ENCODE measurements at regions of chr11 and their contacts with region 1.

Region 1: GRCh38 chr11:72040726-72041441 is 39.5 kb downstream of the NUMA1 start:
- DNase-seq: peak; percentile 83 to 92 (median 84)
- H3K4me3 ChIP-seq: peak overlapping the region; percentile 79 to 88
- H3K4me3 Mint-ChIP-seq: no peak overlapping the region
- H3K27ac ChIP-seq: peak overlapping the region; percentile 75
- H3K27ac Mint-ChIP-seq: no peak overlapping the region
- H3K4me1 ChIP-seq: peaks cover 64% of the 10 kb centered on the region
- H3K4me1 Mint-ChIP-seq: peaks cover 29 to 45% (median 38%) of the 10 kb centered on the region in 4 donors
- H3K27me3 ChIP-seq: no peaks in the 10 kb centered on the region
- H3K27me3 Mint-ChIP-seq: no peaks in the 10 kb centered on the region

Region 2: GRCh38 chr11:71928737-71929452 is 112.0 kb before region 1 on chr11 and contains the start of gene RNF121:
- CTCF ChIA-PET with region 1: no interaction called
- POLR2A ChIA-PET with region 1: interaction called, 26 read pairs
- intact Hi-C with region 1: no loop called
- DNase-seq: peak; percentile 96 to 99 (median 96)
- H3K4me3 ChIP-seq: peak within 1 kb of the TSS; percentile 92 to 96
- H3K4me3 Mint-ChIP-seq: peak within 1 kb of the TSS; percentile 95 to 100 (median 98)
- H3K27ac ChIP-seq: peak within 1 kb of the TSS; percentile 84
- H3K27ac Mint-ChIP-seq: peak within 1 kb of the TSS; percentile 92 to 100 (median 99)
- H3K4me1 ChIP-seq: peaks cover 41% of the 10 kb centered on the region
- H3K4me1 Mint-ChIP-seq: peaks cover 40 to 60% (median 50%) of the 10 kb centered on the region in 4 donors
- H3K27me3 ChIP-seq: no peaks in the 10 kb centered on the region
- H3K27me3 Mint-ChIP-seq: no peaks in the 10 kb centered on the region
- total RNA-seq, gene RNF121: 28.0 to 33.0 TPM

Region 3: DNA sequence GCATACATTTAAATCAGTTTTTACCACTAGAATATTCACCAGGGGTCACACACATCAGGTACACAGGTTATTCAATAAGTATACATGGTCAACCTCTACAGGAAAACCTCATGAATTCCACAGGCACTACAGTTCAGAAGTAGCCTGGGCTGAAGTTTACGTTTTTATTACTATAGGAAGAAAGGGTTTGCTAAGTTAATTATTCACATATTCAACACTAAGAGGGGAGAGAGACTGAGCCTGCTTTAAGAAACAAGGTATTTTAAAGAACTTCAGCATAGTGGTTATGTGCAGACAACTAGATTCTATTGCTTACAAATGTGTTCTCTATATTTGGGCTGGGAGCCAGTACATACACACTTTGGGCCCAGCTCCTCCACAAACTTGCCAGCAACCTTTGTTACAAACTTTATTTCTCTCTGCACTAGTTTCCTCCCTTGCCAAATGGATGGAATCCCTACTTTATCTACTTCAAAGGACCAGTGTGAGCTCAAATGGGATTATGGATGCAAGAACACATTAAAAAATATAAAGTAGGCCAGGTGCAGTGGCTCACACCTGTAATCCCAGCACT is 10.3 kb before region 1 on chr11:
- CTCF ChIA-PET with region 1: interaction called, 88 read pairs
- POLR2A ChIA-PET with region 1: interaction called, 42 read pairs
- intact Hi-C with region 1: loop called (anchors 1 kb)
- DNase-seq: no peak
- H3K4me3 ChIP-seq: no peak overlapping the region
- H3K4me3 Mint-ChIP-seq: peak overlapping the region in 2 of 8 donors; percentile 2 to 16
- H3K27ac ChIP-seq: no peak overlapping the region
- H3K27ac Mint-ChIP-seq: peak overlapping the region; percentile 27 to 90 (median 73)
- H3K4me1 ChIP-seq: peaks cover 55% of the 10 kb centered on the region
- H3K4me1 Mint-ChIP-seq: peaks cover 27 to 56% (median 45%) of the 10 kb centered on the region in 4 donors
- H3K27me3 ChIP-seq: no peaks in the 10 kb centered on the region
- H3K27me3 Mint-ChIP-seq: no peaks in the 10 kb centered on the region

Region 4: GRCh38 chr11:72080256-72080974 is 39.5 kb after region 1 on chr11 and contains the starts of genes LRRC51 and NUMA1:
- CTCF ChIA-PET with region 1: interaction called, 11 read pairs
- POLR2A ChIA-PET with region 1: interaction called, 137 read pairs
- intact Hi-C with region 1: loop called (anchors 1 kb)
- DNase-seq: peak; percentile 98 to 100 (median 99)
- H3K4me3 ChIP-seq: peak within 1 kb of the TSS; percentile 74 to 79
- H3K4me3 Mint-ChIP-seq: peak within 1 kb of the TSS; percentile 89 to 96 (median 93)
- H3K27ac ChIP-seq: peak within 1 kb of the TSS; percentile 75
- H3K27ac Mint-ChIP-seq: peak within 1 kb of the TSS; percentile 91 to 100 (median 99)
- H3K4me1 ChIP-seq: peaks cover 27% of the 10 kb centered on the region
- H3K4me1 Mint-ChIP-seq: peaks cover 31 to 53% (median 38%) of the 10 kb centered on the region in 4 donors
- H3K27me3 ChIP-seq: no peaks in the 10 kb centered on the region
- H3K27me3 Mint-ChIP-seq: no peaks in the 10 kb centered on the region
- total RNA-seq, gene LRRC51: 4.2 to 4.5 TPM
- total RNA-seq, gene NUMA1: 376 to 380 TPM

Region 5: DNA sequence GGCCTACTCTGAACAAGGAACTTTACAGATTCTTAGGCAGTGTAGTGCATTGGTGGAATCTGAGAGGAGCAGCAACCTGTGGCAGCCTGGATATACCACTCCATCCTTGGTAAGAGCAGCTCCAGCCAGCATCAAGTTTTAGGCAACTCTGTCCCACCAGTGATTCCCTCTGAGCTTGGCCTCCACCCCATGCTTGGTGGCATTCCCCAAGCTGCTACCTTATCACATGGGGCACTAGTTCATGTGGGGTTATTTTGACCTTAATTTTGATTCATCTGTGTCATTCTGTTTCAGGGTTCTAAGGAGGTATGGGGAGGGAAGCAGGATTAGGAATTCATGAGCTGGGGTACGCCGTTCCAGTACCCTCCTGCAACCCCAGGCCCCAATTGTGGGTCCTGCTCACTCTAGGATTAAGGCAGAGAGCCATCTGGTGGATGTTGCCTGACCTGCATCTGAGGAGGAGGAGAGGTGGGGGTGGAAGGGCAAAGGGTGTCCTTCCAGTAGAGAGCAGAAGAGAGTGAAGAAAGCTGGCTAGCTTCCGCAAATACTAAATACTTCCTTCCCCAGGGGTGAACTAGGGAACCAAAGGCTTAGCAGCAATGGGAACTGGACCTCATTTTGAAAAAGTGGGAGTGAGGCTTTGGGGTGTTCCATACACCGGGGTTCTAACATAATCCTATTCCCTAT is 50.3 kb after region 1 on chr11:
- CTCF ChIA-PET with region 1: interaction called, 52 read pairs
- POLR2A ChIA-PET with region 1: interaction called, 137 read pairs
- intact Hi-C with region 1: loop called (anchors 1 kb)
- DNase-seq: peak; percentile 57 to 80 (median 66)
- H3K4me3 ChIP-seq: no peak overlapping the region
- H3K4me3 Mint-ChIP-seq: no peak overlapping the region
- H3K27ac ChIP-seq: no peak overlapping the region
- H3K27ac Mint-ChIP-seq: peak overlapping the region; percentile 10 to 91 (median 81)
- H3K4me1 ChIP-seq: no peaks in the 10 kb centered on the region
- H3K4me1 Mint-ChIP-seq: peaks cover 4 to 11% (median 9%) of the 10 kb centered on the region in 4 donors
- H3K27me3 ChIP-seq: no peaks in the 10 kb centered on the region
- H3K27me3 Mint-ChIP-seq: no peaks in the 10 kb centered on the region

Region 6: DNA sequence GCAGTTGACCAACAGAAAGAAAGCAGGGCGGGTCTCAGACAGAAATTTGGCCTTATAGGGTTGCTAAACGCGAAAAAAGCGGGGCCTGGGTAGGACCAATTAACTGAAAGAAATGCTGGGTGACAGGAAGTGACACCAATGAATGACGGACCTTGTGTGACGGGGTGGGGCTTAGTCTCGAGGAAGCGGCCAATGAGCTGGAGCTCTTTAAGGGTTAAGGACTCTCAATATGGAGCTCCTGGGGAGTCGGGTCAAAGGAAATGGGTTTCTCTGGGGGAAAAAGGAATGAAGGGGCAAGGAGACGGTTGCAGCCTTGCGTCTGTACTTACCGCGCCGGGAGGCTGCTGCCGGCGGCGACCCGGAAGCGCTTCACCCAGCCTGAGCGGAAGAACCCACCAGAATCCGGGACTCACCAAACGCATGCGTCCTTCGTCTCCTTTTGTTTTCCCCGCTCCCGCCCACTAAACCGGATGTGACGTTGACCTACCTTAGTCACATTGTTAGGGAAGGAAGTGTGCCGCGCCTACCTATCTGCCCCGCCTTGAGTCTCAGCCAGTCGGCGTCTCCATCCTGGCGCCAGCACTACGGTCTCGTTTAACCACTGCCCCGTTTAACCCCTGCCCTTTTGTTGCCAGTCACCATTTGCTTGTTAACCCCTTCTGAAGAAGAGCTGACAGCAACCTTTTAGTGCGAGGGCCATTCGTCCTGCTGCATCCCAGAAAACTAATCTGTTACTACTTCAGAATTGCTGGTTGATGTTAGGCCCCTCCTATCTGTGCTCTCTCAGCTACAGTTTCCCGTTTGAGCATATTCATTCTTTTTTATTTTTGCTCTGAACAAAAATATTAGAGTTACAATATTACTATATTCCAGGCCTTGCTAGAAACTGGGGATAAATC is 71.7 kb after region 1 on chr11 and contains the start of gene ANAPC15:
- CTCF ChIA-PET with region 1: interaction called, 4 read pairs
- POLR2A ChIA-PET with region 1: interaction called, 57 read pairs
- intact Hi-C with region 1: loop called (anchors 1 kb)
- DNase-seq: peak; percentile 98 to 100 (median 99)
- H3K4me3 ChIP-seq: peak within 1 kb of the TSS; percentile 79 to 97
- H3K4me3 Mint-ChIP-seq: peak within 1 kb of the TSS; percentile 96 to 99 (median 97)
- H3K27ac ChIP-seq: peak within 1 kb of the TSS; percentile 97
- H3K27ac Mint-ChIP-seq: peak within 1 kb of the TSS; percentile 98 to 100 (median 99)
- H3K4me1 ChIP-seq: peaks cover 18% of the 10 kb centered on the region
- H3K4me1 Mint-ChIP-seq: peaks cover 15 to 34% (median 23%) of the 10 kb centered on the region in 4 donors
- H3K27me3 ChIP-seq: no peaks in the 10 kb centered on the region
- H3K27me3 Mint-ChIP-seq: peaks cover 2 to 3% of the 10 kb centered on the region in 2 donors
- total RNA-seq, gene ANAPC15: 38.6 to 40.2 TPM

Region 7: GRCh38 chr11:72222907-72223614 is 182.2 kb after region 1 on chr11:
- CTCF ChIA-PET with region 1: interaction called, 3 read pairs
- POLR2A ChIA-PET with region 1: interaction called, 50 read pairs
- intact Hi-C with region 1: loop called (anchors 1 kb)
- DNase-seq: peak; percentile 91 to 95 (median 92)
- H3K4me3 ChIP-seq: peak overlapping the region; percentile 48 to 83
- H3K4me3 Mint-ChIP-seq: peak overlapping the region; percentile 89 to 96 (median 91)
- H3K27ac ChIP-seq: peak overlapping the region; percentile 72
- H3K27ac Mint-ChIP-seq: peak overlapping the region; percentile 89 to 96 (median 95)
- H3K4me1 ChIP-seq: peaks cover 19% of the 10 kb centered on the region
- H3K4me1 Mint-ChIP-seq: peaks cover 8 to 31% (median 19%) of the 10 kb centered on the region in 4 donors
- H3K27me3 ChIP-seq: no peaks in the 10 kb centered on the region
- H3K27me3 Mint-ChIP-seq: peaks cover 0 to 7% of the 10 kb centered on the region in 2 donors

Measured in CD4-positive, alpha-beta memory T cell (primary cell).